CD4-positive, alpha-beta T cell (primary cell): ENCODE measurements at regions of chr21 and their contacts with region 1.

Region 1: DNA sequence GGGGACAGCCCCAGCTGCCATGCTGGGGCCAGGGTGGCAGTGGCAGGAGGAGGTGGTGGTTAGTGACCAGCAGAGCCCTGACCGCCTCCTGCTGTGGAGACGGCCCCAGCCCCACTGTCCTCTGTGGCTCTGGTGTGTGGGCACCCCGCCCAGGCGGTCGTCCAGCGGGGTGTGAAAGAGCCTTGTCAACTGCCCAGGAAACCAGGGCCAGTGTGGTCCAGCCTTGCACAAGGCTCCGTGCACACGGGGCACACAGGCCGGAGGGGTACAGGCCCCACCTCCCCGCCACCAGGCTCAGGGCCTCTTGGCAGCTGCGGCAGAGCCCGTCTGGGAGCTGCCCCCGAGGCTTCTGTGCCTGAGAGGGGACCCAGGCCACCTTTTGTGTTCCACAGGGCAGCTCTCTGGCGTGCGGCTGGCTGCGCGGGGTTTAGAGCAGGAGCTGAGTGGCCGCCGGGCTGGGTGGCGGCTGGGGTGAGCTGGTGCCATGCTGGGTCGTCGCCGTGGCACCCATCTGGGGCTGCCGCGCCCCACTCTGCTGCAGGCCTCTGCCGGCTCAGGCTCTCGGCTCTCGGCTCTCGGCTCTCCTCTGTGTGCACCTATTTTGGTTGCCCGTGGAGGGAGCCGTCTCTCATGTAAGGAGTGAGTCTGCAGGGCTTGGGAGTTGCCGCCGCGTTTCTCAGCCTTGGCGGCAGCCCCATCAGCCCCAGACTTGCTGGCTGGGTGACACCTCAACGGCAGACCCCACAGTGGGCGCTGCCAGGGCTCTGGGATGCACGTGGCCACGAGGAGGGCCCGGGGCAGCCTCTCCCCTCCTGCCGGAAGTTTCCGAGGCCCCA is 36.1 kb downstream of the SLX9 start:
- DNase-seq: no peak
- ATAC-seq: no peak
- H3K4me3 ChIP-seq: no peak overlapping the region
- H3K4me3 Mint-ChIP-seq: no peak overlapping the region
- H3K27ac ChIP-seq: no peak overlapping the region
- H3K27ac Mint-ChIP-seq: no peak overlapping the region
- H3K4me1 ChIP-seq: no peaks in the 10 kb centered on the region
- H3K4me1 Mint-ChIP-seq: no peaks in the 10 kb centered on the region
- H3K27me3 ChIP-seq: no peaks in the 10 kb centered on the region
- H3K27me3 Mint-ChIP-seq: no peaks in the 10 kb centered on the region
- CTCF ChIP-seq: no peak

Region 2: GRCh38 chr21:45055861-45056260 is 79.9 kb after region 1 on chr21:
- CTCF ChIA-PET with region 1: no interaction called
- POLR2A ChIA-PET with region 1: no interaction called
- intact Hi-C with region 1: loop called in 1 of 2 experiments (anchors 5 kb)
- DNase-seq: no peak
- ATAC-seq: no peak
- H3K4me3 ChIP-seq: no peak overlapping the region
- H3K4me3 Mint-ChIP-seq: no peak overlapping the region
- H3K27ac ChIP-seq: no peak overlapping the region
- H3K27ac Mint-ChIP-seq: no peak overlapping the region
- H3K4me1 ChIP-seq: no peaks in the 10 kb centered on the region
- H3K4me1 Mint-ChIP-seq: no peaks in the 10 kb centered on the region
- H3K27me3 ChIP-seq: peaks cover 0 to 12% of the 10 kb centered on the region in 2 experiments
- H3K27me3 Mint-ChIP-seq: peaks cover 27% of the 10 kb centered on the region
- CTCF ChIP-seq: no peak